Naive thymus-derived CD8-positive, alpha-beta T cell (primary cell): ENCODE measurements at regions of chr9 and their contacts with region 1.

Region 1: GRCh38 chr9:128007566-128008138 is 26.9 kb upstream of the EEIG1 start:
- DNase-seq: peak; percentile 83 to 98 (median 94)
- ATAC-seq: peak; percentile 88 to 93
- H3K4me3 Mint-ChIP-seq: peak overlapping the region; percentile 76 to 94 (median 90)
- H3K27ac Mint-ChIP-seq: peak overlapping the region; percentile 95 to 100 (median 99)
- H3K4me1 Mint-ChIP-seq: peaks cover 32 to 88% (median 74%) of the 10 kb centered on the region in 4 donors
- H3K27me3 Mint-ChIP-seq: no peaks in the 10 kb centered on the region

Region 2: DNA sequence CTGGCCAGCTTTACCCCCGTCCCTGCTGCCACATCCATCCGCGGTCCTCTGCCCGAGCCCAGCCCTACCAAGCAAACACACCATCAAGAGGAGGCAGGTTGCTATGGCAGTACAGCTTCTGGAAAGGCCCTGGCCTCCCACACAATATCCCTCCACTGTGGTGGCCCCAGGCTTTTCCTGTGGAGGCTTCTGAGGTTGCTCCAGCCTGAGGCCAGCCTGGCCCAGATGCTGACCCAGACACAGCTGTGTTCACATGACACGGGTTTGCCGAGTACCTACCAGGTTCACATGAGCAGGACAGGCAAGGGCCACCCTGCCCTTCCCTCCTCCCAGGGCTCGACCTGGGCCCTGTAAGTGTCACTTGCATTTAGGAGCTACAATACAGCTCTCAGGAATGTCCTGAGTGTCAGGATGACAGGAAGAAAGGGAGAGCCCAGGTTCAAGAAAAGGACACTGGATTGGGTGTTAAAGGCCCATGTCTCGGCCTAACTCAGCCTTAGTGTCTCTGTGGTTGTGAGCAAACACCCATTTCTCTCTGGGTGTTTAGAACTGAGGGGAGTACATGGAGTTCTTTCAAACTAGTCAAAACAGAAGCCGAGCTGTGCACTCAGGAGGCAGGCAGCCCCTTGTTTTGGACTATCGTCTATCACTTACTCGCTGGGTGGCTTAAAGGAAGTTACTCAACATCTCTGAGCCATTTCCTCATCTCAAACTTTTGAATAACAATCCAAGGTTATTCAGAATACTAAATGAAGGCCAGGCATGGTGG is 19.3 kb after region 1 on chr9:
- POLR2A ChIA-PET with region 1: interaction called, 376 read pairs
- DNase-seq: peak in 6 of 10 donors; percentile 28 to 73 (median 56)
- ATAC-seq: peak; percentile 11 to 26
- H3K4me3 Mint-ChIP-seq: peak overlapping the region; percentile 72 to 89 (median 84)
- H3K27ac Mint-ChIP-seq: peak overlapping the region; percentile 95 to 100 (median 99)
- H3K4me1 Mint-ChIP-seq: peaks cover 38 to 92% (median 83%) of the 10 kb centered on the region in 4 donors
- H3K27me3 Mint-ChIP-seq: no peaks in the 10 kb centered on the region

Region 3: GRCh38 chr9:128127990-128128835 is 120.6 kb after region 1 on chr9:
- POLR2A ChIA-PET with region 1: no interaction called
- DNase-seq: peak; percentile 75 to 98 (median 88)
- ATAC-seq: peak; percentile 76 to 85
- H3K4me3 Mint-ChIP-seq: peak overlapping the region; percentile 92 to 99 (median 98)
- H3K27ac Mint-ChIP-seq: peak overlapping the region; percentile 98 to 100 (median 99)
- H3K4me1 Mint-ChIP-seq: peaks cover 20 to 46% (median 34%) of the 10 kb centered on the region in 4 donors
- H3K27me3 Mint-ChIP-seq: peaks cover 0 to 3% (median 0%) of the 10 kb centered on the region in 5 donors